Activated B cell treated with CpG ODN at 0.5 μM for 24 hours (primary cell): ENCODE measurements at regions of chr20 and their contacts with region 1.

Region 1: DNA sequence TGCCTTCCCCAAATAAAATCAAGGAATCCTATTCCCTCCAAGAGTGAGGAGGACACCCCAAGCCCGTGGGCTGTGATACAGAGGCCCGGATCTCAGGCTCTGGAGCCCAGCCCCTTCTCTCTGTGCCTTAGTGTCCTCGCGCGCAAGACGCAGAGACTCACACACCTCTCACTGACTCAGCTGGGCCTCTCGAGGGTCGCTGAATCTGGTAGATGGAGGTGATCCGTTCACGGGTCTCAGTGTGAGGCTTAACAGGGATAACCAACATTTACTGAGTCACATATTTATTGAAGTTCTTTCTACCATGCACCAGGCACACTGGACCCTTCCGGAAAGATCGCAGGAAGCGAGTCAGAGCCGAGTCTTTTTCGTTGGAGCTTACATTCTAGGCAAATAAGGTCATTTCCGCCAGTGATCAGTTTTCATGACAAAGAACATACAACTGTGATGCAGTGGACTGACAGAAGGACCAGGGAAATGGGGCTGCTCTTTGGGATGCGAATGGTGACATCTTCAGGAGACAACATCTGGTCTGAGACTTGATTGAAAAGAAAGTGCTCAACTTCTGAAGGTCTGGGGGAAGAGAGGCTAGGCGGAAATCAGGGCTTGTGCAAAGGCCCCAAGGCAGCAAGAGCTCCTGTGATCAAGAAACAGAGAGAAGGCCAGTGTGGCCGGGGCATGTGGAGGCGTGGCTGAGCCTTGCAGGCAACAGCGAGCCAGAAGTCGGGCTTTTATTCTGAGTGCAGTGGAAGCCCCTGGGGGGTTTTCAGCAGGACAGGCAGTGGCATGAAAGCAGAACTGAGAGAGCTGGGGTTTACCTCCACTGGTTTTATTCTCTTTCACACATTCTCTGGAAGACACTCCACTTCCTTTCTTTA is 56.8 kb downstream of the APCDD1L start:
- DNase-seq: peak; percentile 58
- ATAC-seq: peak; percentile 99
- H3K4me3 Mint-ChIP-seq: peak overlapping the region; percentile 53
- H3K27ac Mint-ChIP-seq: peak overlapping the region; percentile 74
- H3K4me1 Mint-ChIP-seq: peaks cover 30% of the 10 kb centered on the region
- H3K27me3 Mint-ChIP-seq: no peaks in the 10 kb centered on the region
- CTCF ChIP-seq: no peak

Region 2: GRCh38 chr20:58447511-58448391 is 10.7 kb before region 1 on chr20:
- CTCF ChIA-PET with region 1: interaction called, 6 read pairs
- POLR2A ChIA-PET with region 1: no interaction called
- intact Hi-C with region 1: loop called (anchors 1 kb)
- DNase-seq: no peak
- ATAC-seq: peak; percentile 57
- H3K4me3 Mint-ChIP-seq: no peak overlapping the region
- H3K27ac Mint-ChIP-seq: no peak overlapping the region
- H3K4me1 Mint-ChIP-seq: peaks cover 16% of the 10 kb centered on the region
- H3K27me3 Mint-ChIP-seq: no peaks in the 10 kb centered on the region
- CTCF ChIP-seq: no peak